ENCODE measurements at regions of chr3 and their contacts with region 1.

Region 1: DNA sequence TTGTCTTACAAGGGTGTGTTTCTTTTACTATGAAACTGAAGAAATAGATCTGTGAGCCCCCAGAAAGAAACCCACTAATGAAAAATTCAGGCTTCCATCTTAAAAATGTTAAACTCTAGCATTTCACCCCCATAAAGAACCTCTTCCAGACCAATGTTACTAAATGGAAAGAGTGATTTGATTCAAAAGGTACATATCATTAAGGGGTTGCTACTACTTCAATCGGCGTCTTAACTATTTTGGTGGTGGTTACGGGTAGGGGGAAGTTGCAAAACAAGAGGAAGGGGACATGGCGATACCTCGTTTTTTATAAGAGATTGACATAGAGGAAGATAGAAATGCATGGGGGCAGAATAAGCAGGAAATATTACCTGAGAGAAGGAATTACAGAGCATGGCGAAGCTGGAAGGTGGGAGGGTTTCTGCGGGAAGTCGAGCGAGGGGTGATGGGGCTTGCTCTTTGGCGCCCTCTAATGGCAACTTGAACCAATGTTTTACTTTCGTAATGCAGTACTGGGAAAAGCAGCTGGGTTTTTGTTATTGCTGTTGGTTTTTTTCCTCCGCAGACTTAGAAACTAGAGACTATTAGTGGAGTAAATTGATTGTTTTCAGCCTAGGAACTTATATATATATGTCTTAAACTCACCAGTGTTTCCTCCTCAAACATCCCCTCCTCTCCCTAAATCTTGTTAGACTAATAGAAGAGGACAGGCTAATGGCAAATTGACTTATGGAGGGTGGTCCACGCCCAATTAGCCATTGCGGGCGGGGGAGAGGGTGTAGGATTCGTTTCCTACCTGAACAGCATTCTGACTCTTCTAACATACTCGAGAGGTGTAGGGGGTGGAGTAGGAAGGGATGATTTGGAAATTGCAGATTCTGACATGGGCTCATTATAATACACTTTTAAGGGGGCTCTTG is 11.3 kb upstream of the SOX2 start:
- DNase-seq: peak; percentile 89
- H3K4me3 ChIP-seq: peak overlapping the region; percentile 38 to 75 (median 43)
- H3K27ac ChIP-seq: no peak overlapping the region
- H3K4me1 ChIP-seq: peaks cover 28% of the 10 kb centered on the region
- H3K27me3 ChIP-seq: peaks cover 0 to 2% of the 10 kb centered on the region in 2 experiments
- CTCF ChIP-seq: peak; percentile 84 to 90
- POLR2A ChIP-seq: no peak

Region 2: DNA sequence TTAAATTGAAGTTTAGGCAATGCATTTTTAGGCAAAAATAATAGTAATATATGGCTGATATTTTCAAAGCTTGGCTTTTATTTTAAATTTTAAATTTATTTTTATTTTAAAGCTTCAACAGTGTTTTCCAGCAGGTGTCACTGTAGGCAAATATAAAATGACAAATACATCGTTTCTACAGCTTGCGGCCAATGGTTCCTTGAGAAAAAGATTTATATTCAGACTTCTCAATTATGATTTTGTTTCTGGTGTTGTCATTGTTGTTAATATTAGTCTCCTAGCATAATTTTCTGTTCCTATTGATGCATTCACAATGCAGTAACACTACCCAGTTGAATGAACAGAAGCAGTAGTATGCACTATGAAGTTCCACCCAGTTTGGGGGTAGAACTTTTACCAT is 490.2 kb before region 1 on chr3:
- CTCF ChIA-PET with region 1: interaction called, 94 read pairs
- POLR2A ChIA-PET with region 1: interaction called, 3 read pairs
- dilution Hi-C with region 1: no loop called
- intact Hi-C with region 1: loop called (anchors 1 kb)
- DNase-seq: peak; percentile 27
- H3K4me3 ChIP-seq: no peak overlapping the region
- H3K27ac ChIP-seq: no peak overlapping the region
- H3K4me1 ChIP-seq: no peaks in the 10 kb centered on the region
- H3K27me3 ChIP-seq: peaks cover 1 to 3% of the 10 kb centered on the region in 2 experiments
- CTCF ChIP-seq: peak; percentile 5 to 20
- POLR2A ChIP-seq: no peak

Region 3: GRCh38 chr3:181425074-181425473 is 275.4 kb before region 1 on chr3:
- CTCF ChIA-PET with region 1: interaction called, 16 read pairs
- POLR2A ChIA-PET with region 1: no interaction called
- dilution Hi-C with region 1: no loop called
- intact Hi-C with region 1: no loop called
- DNase-seq: no peak
- H3K4me3 ChIP-seq: no peak overlapping the region
- H3K27ac ChIP-seq: no peak overlapping the region
- H3K4me1 ChIP-seq: no peaks in the 10 kb centered on the region
- H3K27me3 ChIP-seq: no peaks in the 10 kb centered on the region
- CTCF ChIP-seq: no peak
- POLR2A ChIP-seq: no peak

Region 4: GRCh38 chr3:181578743-181579142 is 121.7 kb before region 1 on chr3:
- CTCF ChIA-PET with region 1: interaction called, 12 read pairs
- POLR2A ChIA-PET with region 1: no interaction called
- dilution Hi-C with region 1: no loop called
- intact Hi-C with region 1: no loop called
- DNase-seq: no peak
- H3K4me3 ChIP-seq: no peak overlapping the region
- H3K27ac ChIP-seq: no peak overlapping the region
- H3K4me1 ChIP-seq: no peaks in the 10 kb centered on the region
- H3K27me3 ChIP-seq: no peaks in the 10 kb centered on the region
- CTCF ChIP-seq: no peak
- POLR2A ChIP-seq: no peak

Region 5: DNA sequence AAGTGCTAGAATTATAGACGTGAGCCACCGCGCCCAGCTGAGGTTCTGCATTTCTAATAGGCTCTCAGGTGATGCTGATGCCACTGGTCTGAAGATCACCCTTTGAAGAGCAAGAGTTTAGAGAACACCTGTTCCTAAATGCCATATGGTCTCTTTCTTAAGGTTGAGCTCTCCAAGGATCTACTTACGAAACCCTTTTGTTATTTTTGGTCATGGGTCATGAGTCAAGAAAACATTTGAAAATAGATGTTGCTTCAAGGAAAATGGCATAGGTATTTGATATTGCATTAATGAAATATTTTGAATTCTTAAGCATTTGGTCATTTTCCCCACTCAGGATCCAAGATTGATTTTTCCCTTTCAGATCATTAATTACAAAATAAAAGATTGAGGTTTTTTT is 63.4 kb before region 1 on chr3:
- CTCF ChIA-PET with region 1: interaction called, 52 read pairs
- POLR2A ChIA-PET with region 1: interaction called, 3 read pairs
- dilution Hi-C with region 1: no loop called
- intact Hi-C with region 1: loop called (anchors 1 kb)
- DNase-seq: no peak
- H3K4me3 ChIP-seq: no peak overlapping the region
- H3K27ac ChIP-seq: no peak overlapping the region
- H3K4me1 ChIP-seq: peaks cover 11% of the 10 kb centered on the region
- H3K27me3 ChIP-seq: no peaks in the 10 kb centered on the region
- CTCF ChIP-seq: no peak
- POLR2A ChIP-seq: no peak

Region 6: GRCh38 chr3:181906338-181906737 is 205.9 kb after region 1 on chr3:
- CTCF ChIA-PET with region 1: no interaction called
- POLR2A ChIA-PET with region 1: no interaction called
- dilution Hi-C with region 1: no loop called
- intact Hi-C with region 1: no loop called
- DNase-seq: no peak
- H3K4me3 ChIP-seq: no peak overlapping the region
- H3K27ac ChIP-seq: no peak overlapping the region
- H3K4me1 ChIP-seq: no peaks in the 10 kb centered on the region
- H3K27me3 ChIP-seq: no peaks in the 10 kb centered on the region
- CTCF ChIP-seq: no peak
- POLR2A ChIP-seq: no peak

Region 7: DNA sequence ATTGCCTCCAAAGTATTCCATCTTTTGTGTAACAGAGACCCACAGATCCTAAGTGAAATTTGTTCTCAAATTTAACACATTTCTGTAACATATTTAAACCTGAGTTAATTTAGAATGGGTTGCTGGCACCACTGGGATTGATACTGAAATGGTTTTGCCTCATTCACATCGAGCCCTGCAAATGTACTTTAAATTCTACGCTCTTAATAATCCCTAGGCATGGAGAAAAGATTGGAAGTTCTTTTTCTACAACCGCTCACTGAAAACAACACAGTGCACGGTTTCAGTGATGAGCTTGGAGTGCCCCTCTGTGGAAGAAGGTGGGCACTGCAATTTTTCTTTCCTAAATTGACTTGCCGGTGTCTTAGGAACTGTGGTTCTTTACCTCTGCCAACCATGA is 983.0 kb after region 1 on chr3:
- CTCF ChIA-PET with region 1: interaction called, 63 read pairs
- POLR2A ChIA-PET with region 1: no interaction called
- dilution Hi-C with region 1: no loop called
- intact Hi-C with region 1: no loop called
- DNase-seq: peak; percentile 84
- H3K4me3 ChIP-seq: peak overlapping the region in 1 of 3 experiments; percentile 80
- H3K27ac ChIP-seq: no peak overlapping the region
- H3K4me1 ChIP-seq: peaks cover 10% of the 10 kb centered on the region
- H3K27me3 ChIP-seq: peaks cover 0 to 6% of the 10 kb centered on the region in 2 experiments
- CTCF ChIP-seq: peak; percentile 76 to 91
- POLR2A ChIP-seq: no peak